CD4-positive, alpha-beta T cell (primary cell): ENCODE measurements at regions of chr9 and their contacts with region 1.

Region 1: DNA sequence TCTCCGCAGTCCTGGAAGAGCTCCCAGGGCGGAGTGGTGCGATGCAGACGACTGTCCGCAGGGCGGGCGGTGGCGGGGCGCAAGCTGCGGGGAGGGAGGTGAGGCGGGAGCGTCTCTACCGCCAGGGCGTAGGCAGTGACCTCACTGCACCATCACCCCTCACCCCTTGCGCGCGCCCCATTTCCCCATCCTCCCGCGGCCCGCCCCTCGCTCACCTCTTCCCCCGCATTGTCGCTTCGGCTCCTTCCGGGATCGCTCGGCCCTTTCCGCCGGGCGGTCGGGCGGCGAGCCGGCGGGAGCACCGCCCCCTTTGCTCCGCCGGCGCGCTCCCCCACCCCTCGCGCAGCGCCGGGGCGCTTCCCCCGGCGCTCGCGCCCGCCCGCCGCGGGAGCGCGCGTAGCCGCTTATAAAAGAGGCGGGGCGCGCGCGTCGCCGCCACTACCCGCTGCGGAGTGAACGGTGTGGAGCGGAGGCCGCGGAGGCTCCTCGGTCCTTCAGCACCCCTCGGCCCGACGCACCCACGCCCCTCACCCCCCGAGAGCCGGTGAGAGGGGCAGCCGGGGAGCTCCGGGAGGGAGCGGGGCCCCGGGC is at the start of gene SPTAN1:
- DNase-seq: peak; percentile 89 to 97 (median 96)
- ATAC-seq: peak; percentile 82
- H3K4me3 ChIP-seq: peak within 1 kb of the TSS; percentile 84
- H3K4me3 Mint-ChIP-seq: peak within 1 kb of the TSS; percentile 96
- H3K27ac ChIP-seq: peak within 1 kb of the TSS; percentile 90
- H3K27ac Mint-ChIP-seq: peak within 1 kb of the TSS; percentile 99
- H3K4me1 ChIP-seq: peaks cover 51% of the 10 kb centered on the region
- H3K4me1 Mint-ChIP-seq: peaks cover 25% of the 10 kb centered on the region
- H3K27me3 ChIP-seq: no peaks in the 10 kb centered on the region
- H3K27me3 Mint-ChIP-seq: no peaks in the 10 kb centered on the region
- CTCF ChIP-seq: no peak
- total RNA-seq, gene SPTAN1: 386 to 392 TPM

Region 2: GRCh38 chr9:127796225-127796813 is 755.9 kb before region 1 on chr9:
- CTCF ChIA-PET with region 1: no interaction called
- POLR2A ChIA-PET with region 1: no interaction called
- intact Hi-C with region 1: no loop called
- DNase-seq: no peak
- ATAC-seq: peak; percentile 36
- H3K4me3 ChIP-seq: no peak overlapping the region
- H3K4me3 Mint-ChIP-seq: peak overlapping the region; percentile 75
- H3K27ac ChIP-seq: no peak overlapping the region
- H3K27ac Mint-ChIP-seq: peak overlapping the region; percentile 34
- H3K4me1 ChIP-seq: peaks cover 23% of the 10 kb centered on the region
- H3K4me1 Mint-ChIP-seq: peaks cover 24% of the 10 kb centered on the region
- H3K27me3 ChIP-seq: no peaks in the 10 kb centered on the region
- H3K27me3 Mint-ChIP-seq: no peaks in the 10 kb centered on the region
- CTCF ChIP-seq: no peak

Region 3: GRCh38 chr9:128504485-128505413 is 47.5 kb before region 1 on chr9 and contains the start of gene GLE1:
- CTCF ChIA-PET with region 1: no interaction called
- POLR2A ChIA-PET with region 1: interaction called, 45 read pairs
- intact Hi-C with region 1: loop called (anchors 1 kb)
- DNase-seq: peak; percentile 93 to 99 (median 97)
- ATAC-seq: peak; percentile 94
- H3K4me3 ChIP-seq: peak within 1 kb of the TSS; percentile 99
- H3K4me3 Mint-ChIP-seq: peak within 1 kb of the TSS; percentile 100
- H3K27ac ChIP-seq: peak within 1 kb of the TSS; percentile 80 to 92
- H3K27ac Mint-ChIP-seq: peak within 1 kb of the TSS; percentile 97
- H3K4me1 ChIP-seq: peaks cover 27% of the 10 kb centered on the region
- H3K4me1 Mint-ChIP-seq: peaks cover 41% of the 10 kb centered on the region
- H3K27me3 ChIP-seq: no peaks in the 10 kb centered on the region
- H3K27me3 Mint-ChIP-seq: no peaks in the 10 kb centered on the region
- CTCF ChIP-seq: no peak
- total RNA-seq, gene GLE1: 8.0 to 8.4 TPM

Region 4: GRCh38 chr9:128565578-128565977 is 13.3 kb after region 1 on chr9:
- CTCF ChIA-PET with region 1: no interaction called
- POLR2A ChIA-PET with region 1: interaction called, 21 read pairs
- intact Hi-C with region 1: no loop called
- DNase-seq: no peak
- ATAC-seq: no peak
- H3K4me3 ChIP-seq: no peak overlapping the region
- H3K4me3 Mint-ChIP-seq: no peak overlapping the region
- H3K27ac ChIP-seq: no peak overlapping the region
- H3K27ac Mint-ChIP-seq: peak overlapping the region; percentile 2
- H3K4me1 ChIP-seq: peaks cover 15% of the 10 kb centered on the region
- H3K4me1 Mint-ChIP-seq: peaks cover 44% of the 10 kb centered on the region
- H3K27me3 ChIP-seq: no peaks in the 10 kb centered on the region
- H3K27me3 Mint-ChIP-seq: no peaks in the 10 kb centered on the region
- CTCF ChIP-seq: no peak

Region 5: GRCh38 chr9:128587453-128587852 is 35.2 kb after region 1 on chr9:
- CTCF ChIA-PET with region 1: no interaction called
- POLR2A ChIA-PET with region 1: interaction called, 5 read pairs
- intact Hi-C with region 1: loop called in 1 of 2 experiments (anchors 5 kb)
- DNase-seq: peak; percentile 7 to 72 (median 38)
- ATAC-seq: peak; percentile 95
- H3K4me3 ChIP-seq: no peak overlapping the region
- H3K4me3 Mint-ChIP-seq: peak overlapping the region; percentile 12
- H3K27ac ChIP-seq: no peak overlapping the region
- H3K27ac Mint-ChIP-seq: peak overlapping the region; percentile 82
- H3K4me1 ChIP-seq: peaks cover 10% of the 10 kb centered on the region
- H3K4me1 Mint-ChIP-seq: peaks cover 15% of the 10 kb centered on the region
- H3K27me3 ChIP-seq: no peaks in the 10 kb centered on the region
- H3K27me3 Mint-ChIP-seq: no peaks in the 10 kb centered on the region
- CTCF ChIP-seq: no peak

Region 6: GRCh38 chr9:128621730-128622455 is 69.6 kb after region 1 on chr9:
- CTCF ChIA-PET with region 1: no interaction called
- POLR2A ChIA-PET with region 1: no interaction called
- intact Hi-C with region 1: no loop called
- DNase-seq: no peak
- ATAC-seq: no peak
- H3K4me3 ChIP-seq: no peak overlapping the region
- H3K4me3 Mint-ChIP-seq: no peak overlapping the region
- H3K27ac ChIP-seq: no peak overlapping the region
- H3K27ac Mint-ChIP-seq: no peak overlapping the region
- H3K4me1 ChIP-seq: no peaks in the 10 kb centered on the region
- H3K4me1 Mint-ChIP-seq: no peaks in the 10 kb centered on the region
- H3K27me3 ChIP-seq: no peaks in the 10 kb centered on the region
- H3K27me3 Mint-ChIP-seq: no peaks in the 10 kb centered on the region
- CTCF ChIP-seq: no peak

Region 7: DNA sequence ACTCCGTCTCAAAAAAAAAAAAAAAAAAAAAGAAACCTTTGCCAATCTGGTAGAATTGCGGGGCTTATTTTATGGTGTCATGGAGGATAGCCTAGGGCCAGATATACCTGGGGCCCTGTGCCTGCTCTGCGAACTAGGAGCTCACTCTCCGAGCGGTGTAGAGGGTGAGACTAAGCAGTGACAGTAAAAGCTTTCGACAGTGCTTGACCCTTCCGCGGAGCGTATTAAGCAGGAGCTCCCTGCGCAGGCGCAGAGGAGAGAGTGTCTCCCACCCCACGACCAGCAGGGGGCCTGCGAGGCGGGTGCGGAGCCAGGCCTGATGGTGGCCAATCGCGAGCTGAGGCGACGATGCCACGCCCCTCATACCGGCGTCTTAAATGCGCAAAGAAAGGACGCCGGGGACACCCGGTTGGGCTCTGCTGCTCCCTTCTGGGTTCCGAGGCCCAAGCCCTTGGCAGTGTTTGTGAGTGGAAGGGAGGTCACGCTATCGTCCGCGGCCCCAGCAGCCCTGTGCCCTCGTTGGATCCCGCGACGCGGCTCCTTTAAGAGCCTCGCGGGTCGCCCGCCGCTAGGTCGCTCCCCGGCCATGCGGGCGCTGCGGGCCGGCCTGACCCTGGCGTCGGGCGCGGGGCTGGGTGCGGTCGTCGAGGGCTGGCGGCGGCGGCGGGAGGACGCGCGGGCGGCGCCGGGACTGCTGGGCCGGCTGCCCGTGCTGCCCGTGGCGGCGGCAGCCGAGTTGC is 266.0 kb after region 1 on chr9 and contains the start of gene ENDOG:
- CTCF ChIA-PET with region 1: interaction called, 3 read pairs
- POLR2A ChIA-PET with region 1: interaction called, 10 read pairs
- intact Hi-C with region 1: no loop called
- DNase-seq: peak; percentile 92 to 98 (median 97)
- ATAC-seq: peak; percentile 95
- H3K4me3 ChIP-seq: peak within 1 kb of the TSS; percentile 65
- H3K4me3 Mint-ChIP-seq: peak within 1 kb of the TSS; percentile 93
- H3K27ac ChIP-seq: peak within 1 kb of the TSS; percentile 34 to 53
- H3K27ac Mint-ChIP-seq: peak within 1 kb of the TSS; percentile 89
- H3K4me1 ChIP-seq: peaks cover 23% of the 10 kb centered on the region
- H3K4me1 Mint-ChIP-seq: peaks cover 11% of the 10 kb centered on the region
- H3K27me3 ChIP-seq: no peaks in the 10 kb centered on the region
- H3K27me3 Mint-ChIP-seq: no peaks in the 10 kb centered on the region
- CTCF ChIP-seq: peak; percentile 96
- total RNA-seq, gene ENDOG: 3.2 to 3.7 TPM